PC-9 (cell line): ENCODE measurements at regions of chr5 and their contacts with region 1.

Region 1: GRCh38 chr5:177390363-177391300 is 6.4 kb downstream of the SLC34A1 start:
- DNase-seq: peak; percentile 78 to 89
- H3K4me3 ChIP-seq: peak overlapping the region; percentile 25; the same call in 1 of the 2 replicates
- H3K27ac ChIP-seq: peak overlapping the region; percentile 96
- H3K4me1 ChIP-seq: peaks cover 35% of the 10 kb centered on the region
- H3K27me3 ChIP-seq: no peaks in the 10 kb centered on the region
- CTCF ChIP-seq: peak; percentile 97

Region 2: GRCh38 chr5:177113566-177114424 is 276.8 kb before region 1 on chr5:
- CTCF ChIA-PET with region 1: no interaction called
- POLR2A ChIA-PET with region 1: no interaction called
- intact Hi-C with region 1: loop called (anchors 2 kb)
- DNase-seq: peak; percentile 52 to 81
- H3K4me3 ChIP-seq: no peak overlapping the region
- H3K27ac ChIP-seq: no peak overlapping the region
- H3K4me1 ChIP-seq: no peaks in the 10 kb centered on the region
- H3K27me3 ChIP-seq: no peaks in the 10 kb centered on the region
- CTCF ChIP-seq: peak; percentile 98

Region 3: DNA sequence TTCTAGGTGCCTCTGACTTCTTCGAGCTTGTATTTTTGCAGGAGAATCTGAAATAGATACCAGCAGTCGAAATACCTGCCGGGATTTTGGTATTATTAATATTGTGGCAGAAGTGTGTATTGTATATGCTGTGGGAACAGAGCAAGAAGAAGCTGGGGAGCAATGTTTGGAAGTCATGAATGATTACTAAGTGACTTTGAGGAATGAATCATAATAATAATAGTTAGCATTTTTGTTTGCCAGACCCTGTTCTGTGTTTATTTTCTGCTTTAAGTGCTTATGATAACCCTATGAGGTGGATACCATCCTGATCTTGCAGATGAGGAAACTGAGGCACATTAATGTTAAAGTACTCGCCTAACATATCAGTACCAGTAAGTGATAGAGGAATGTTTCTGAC is 119.5 kb before region 1 on chr5:
- CTCF ChIA-PET with region 1: no interaction called
- POLR2A ChIA-PET with region 1: no interaction called
- intact Hi-C with region 1: no loop called
- DNase-seq: no peak
- H3K4me3 ChIP-seq: no peak overlapping the region
- H3K27ac ChIP-seq: no peak overlapping the region
- H3K4me1 ChIP-seq: no peaks in the 10 kb centered on the region
- H3K27me3 ChIP-seq: no peaks in the 10 kb centered on the region
- CTCF ChIP-seq: no peak

Region 4: GRCh38 chr5:177317959-177318377 is 72.7 kb before region 1 on chr5:
- CTCF ChIA-PET with region 1: interaction called, 6 read pairs
- POLR2A ChIA-PET with region 1: no interaction called
- intact Hi-C with region 1: loop called (anchors 1 kb)
- DNase-seq: peak; percentile 67 to 72
- H3K4me3 ChIP-seq: no peak overlapping the region
- H3K27ac ChIP-seq: no peak overlapping the region
- H3K4me1 ChIP-seq: peaks cover 4% of the 10 kb centered on the region; the same call in 1 of the 2 replicates
- H3K27me3 ChIP-seq: no peaks in the 10 kb centered on the region
- CTCF ChIP-seq: peak; percentile 92

Region 5: GRCh38 chr5:177351385-177352329 is 39.0 kb before region 1 on chr5 and contains the start of gene LMAN2:
- CTCF ChIA-PET with region 1: interaction called, 5 read pairs
- POLR2A ChIA-PET with region 1: interaction called, 7 read pairs
- intact Hi-C with region 1: loop called (anchors 5 kb)
- DNase-seq: peak; percentile 88 to 92
- H3K4me3 ChIP-seq: peak within 1 kb of the TSS; percentile 78
- H3K27ac ChIP-seq: peak within 1 kb of the TSS; percentile 85
- H3K4me1 ChIP-seq: peaks cover 20% of the 10 kb centered on the region
- H3K27me3 ChIP-seq: no peaks in the 10 kb centered on the region
- CTCF ChIP-seq: no peak
- total RNA-seq, gene LMAN2: 129 and 153 TPM in 2 replicates

Region 6: GRCh38 chr5:177378884-177379883 is 11.4 kb before region 1 on chr5:
- CTCF ChIA-PET with region 1: interaction called, 17 read pairs
- POLR2A ChIA-PET with region 1: no interaction called
- intact Hi-C with region 1: no loop called
- DNase-seq: peak; percentile 41 to 71
- H3K4me3 ChIP-seq: no peak overlapping the region
- H3K27ac ChIP-seq: no peak overlapping the region
- H3K4me1 ChIP-seq: peaks cover 9% of the 10 kb centered on the region; the same call in 1 of the 2 replicates
- H3K27me3 ChIP-seq: no peaks in the 10 kb centered on the region
- CTCF ChIP-seq: no peak

Region 7: DNA sequence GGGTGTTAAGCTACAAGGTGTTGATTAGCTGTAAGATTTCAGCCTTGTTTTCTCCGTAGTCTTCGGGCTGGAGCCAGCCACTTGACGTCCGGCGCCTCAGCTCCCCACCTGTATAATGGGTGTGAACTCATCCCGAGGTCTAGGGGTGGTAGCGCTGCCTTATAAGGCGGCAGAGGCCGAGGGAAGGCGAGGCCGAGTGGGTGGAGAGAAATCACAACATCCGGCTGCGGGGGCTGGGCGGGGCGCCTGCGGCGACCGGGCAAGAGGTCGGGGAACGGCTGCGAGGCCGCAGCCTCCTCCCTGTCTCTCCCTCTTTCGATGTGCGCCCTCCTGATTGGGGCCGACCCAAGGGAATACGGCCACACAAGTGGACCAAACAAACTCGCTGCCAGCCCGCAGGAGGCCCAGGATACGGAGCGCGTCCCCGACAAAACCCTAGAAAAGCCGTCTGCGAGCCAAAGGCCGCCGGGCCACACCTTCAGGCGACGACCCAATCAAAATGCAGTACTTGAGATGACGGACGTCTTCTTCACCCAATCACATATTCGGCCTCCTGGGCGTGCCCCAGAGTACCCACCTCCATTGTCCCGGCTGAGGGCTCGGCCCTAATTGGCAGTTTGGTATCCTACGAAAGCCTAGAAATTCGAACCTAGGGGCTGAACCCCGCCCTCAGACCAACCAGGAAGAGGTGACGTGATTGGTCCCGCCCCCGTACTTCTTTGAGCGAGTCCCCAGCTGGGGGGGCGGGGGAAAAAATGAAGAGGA is 35.4 kb after region 1 on chr5:
- CTCF ChIA-PET with region 1: interaction called, 18 read pairs
- POLR2A ChIA-PET with region 1: interaction called, 23 read pairs
- intact Hi-C with region 1: loop called (anchors 1 kb)
- DNase-seq: peak; percentile 99 to 100
- H3K4me3 ChIP-seq: peak overlapping the region; percentile 64
- H3K27ac ChIP-seq: peak overlapping the region; percentile 81
- H3K4me1 ChIP-seq: peaks cover 23% of the 10 kb centered on the region
- H3K27me3 ChIP-seq: no peaks in the 10 kb centered on the region
- CTCF ChIP-seq: no peak

Region 8: DNA sequence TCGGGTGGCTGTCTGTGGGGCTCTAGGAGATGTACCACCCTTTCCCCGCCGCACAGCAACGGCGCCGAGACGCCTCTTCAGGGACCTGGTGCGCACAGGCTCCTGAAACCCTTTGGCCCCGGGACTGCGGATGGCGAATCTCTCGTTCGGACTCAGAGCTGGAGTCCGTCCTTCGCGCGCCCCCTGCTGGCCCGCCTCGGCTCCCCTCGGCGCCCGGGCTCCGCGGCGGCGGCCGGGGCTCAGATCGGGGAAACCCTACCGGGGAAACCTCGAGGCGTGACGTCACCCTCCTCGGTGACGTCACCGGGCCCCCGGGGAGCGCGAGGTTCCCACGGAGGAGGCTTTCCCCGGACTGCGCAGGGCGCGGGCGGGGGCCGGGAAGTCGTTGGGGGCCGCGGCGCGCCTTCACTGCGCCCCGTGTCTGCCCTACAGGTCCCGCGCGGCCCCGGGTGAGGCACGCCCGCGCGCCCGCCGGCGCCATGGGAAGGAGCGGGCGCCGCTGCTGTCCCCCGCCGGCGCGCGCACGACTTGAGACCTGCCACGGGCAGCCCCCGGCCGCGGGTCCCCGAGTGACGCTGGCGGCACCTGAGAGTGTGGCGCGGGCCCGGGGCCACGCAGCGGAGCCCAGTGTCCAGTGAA is 63.9 kb after region 1 on chr5:
- CTCF ChIA-PET with region 1: interaction called, 5 read pairs
- POLR2A ChIA-PET with region 1: interaction called, 7 read pairs
- intact Hi-C with region 1: loop called (anchors 1 kb)
- DNase-seq: peak; percentile 71 to 96
- H3K4me3 ChIP-seq: peak overlapping the region; percentile 77
- H3K27ac ChIP-seq: 0 out of 2 replicates have a peak overlapping the region, but pooled peaks have one; percentile 26
- H3K4me1 ChIP-seq: 0 out of 2 replicates have a peak, but pooled peaks cover 5% of the 10 kb centered on the region
- H3K27me3 ChIP-seq: no peaks in the 10 kb centered on the region
- CTCF ChIP-seq: peak; percentile 82

Region 9: GRCh38 chr5:177537389-177538361 is 147.0 kb after region 1 on chr5:
- CTCF ChIA-PET with region 1: no interaction called
- POLR2A ChIA-PET with region 1: no interaction called
- intact Hi-C with region 1: no loop called
- DNase-seq: no peak
- H3K4me3 ChIP-seq: no peak overlapping the region
- H3K27ac ChIP-seq: no peak overlapping the region
- H3K4me1 ChIP-seq: no peaks in the 10 kb centered on the region
- H3K27me3 ChIP-seq: no peaks in the 10 kb centered on the region
- CTCF ChIP-seq: no peak